MCF 10A (cell line): ENCODE measurements at regions of chr4 and their contacts with region 1.

Region 1: GRCh38 chr4:73069338-73070073 is at the start of gene COX18:
- DNase-seq: peak; percentile 98
- H3K4me3 Mint-ChIP-seq: peak within 1 kb of the TSS; percentile 81
- H3K27ac Mint-ChIP-seq: peak within 1 kb of the TSS; percentile 86
- H3K4me1 Mint-ChIP-seq: peaks cover 9% of the 10 kb centered on the region
- H3K27me3 Mint-ChIP-seq: no peaks in the 10 kb centered on the region
- CTCF ChIP-seq: no peak
- total RNA-seq, gene COX18: 19.1 and 19.7 TPM in 2 replicates

Region 2: GRCh38 chr4:72900952-72901351 is 168.6 kb before region 1 on chr4:
- CTCF ChIA-PET with region 1: no interaction called
- POLR2A ChIA-PET with region 1: no interaction called
- intact Hi-C with region 1: no loop called
- DNase-seq: no peak
- H3K4me3 Mint-ChIP-seq: no peak overlapping the region
- H3K27ac Mint-ChIP-seq: no peak overlapping the region
- H3K4me1 Mint-ChIP-seq: peaks cover 7% of the 10 kb centered on the region
- H3K27me3 Mint-ChIP-seq: no peaks in the 10 kb centered on the region
- CTCF ChIP-seq: no peak

Region 3: GRCh38 chr4:72987741-72988729 is 81.5 kb before region 1 on chr4:
- CTCF ChIA-PET with region 1: no interaction called
- POLR2A ChIA-PET with region 1: no interaction called
- intact Hi-C with region 1: no loop called
- DNase-seq: no peak
- H3K4me3 Mint-ChIP-seq: no peak overlapping the region
- H3K27ac Mint-ChIP-seq: no peak overlapping the region
- H3K4me1 Mint-ChIP-seq: no peaks in the 10 kb centered on the region
- H3K27me3 Mint-ChIP-seq: no peaks in the 10 kb centered on the region
- CTCF ChIP-seq: no peak

Region 4: GRCh38 chr4:73080789-73081188 is 11.3 kb after region 1 on chr4:
- CTCF ChIA-PET with region 1: interaction called, 14 read pairs
- POLR2A ChIA-PET with region 1: interaction called, 5 read pairs
- intact Hi-C with region 1: no loop called
- DNase-seq: no peak
- H3K4me3 Mint-ChIP-seq: no peak overlapping the region
- H3K27ac Mint-ChIP-seq: peak overlapping the region; percentile 73
- H3K4me1 Mint-ChIP-seq: peaks cover 13% of the 10 kb centered on the region
- H3K27me3 Mint-ChIP-seq: no peaks in the 10 kb centered on the region
- CTCF ChIP-seq: no peak